CD4-positive, alpha-beta memory T cell (primary cell): ENCODE measurements at regions of chr18 and their contacts with region 1.

Region 1: GRCh38 chr18:45751766-45752165 is 27.8 kb downstream of the SLC14A1 start:
- DNase-seq: no peak
- H3K4me3 ChIP-seq: no peak overlapping the region
- H3K4me3 Mint-ChIP-seq: no peak overlapping the region
- H3K27ac ChIP-seq: no peak overlapping the region
- H3K27ac Mint-ChIP-seq: no peak overlapping the region
- H3K4me1 ChIP-seq: no peaks in the 10 kb centered on the region
- H3K4me1 Mint-ChIP-seq: no peaks in the 10 kb centered on the region
- H3K27me3 ChIP-seq: no peaks in the 10 kb centered on the region
- H3K27me3 Mint-ChIP-seq: peaks cover 10 to 19% of the 10 kb centered on the region in 2 donors

Region 2: GRCh38 chr18:45774065-45774521 is 22.3 kb after region 1 on chr18:
- CTCF ChIA-PET with region 1: no interaction called
- POLR2A ChIA-PET with region 1: interaction called, 3 read pairs
- intact Hi-C with region 1: loop called (anchors 1 kb)
- DNase-seq: peak in 4 of 5 donors; percentile 23 to 33 (median 30)
- H3K4me3 ChIP-seq: no peak overlapping the region
- H3K4me3 Mint-ChIP-seq: peak overlapping the region in 7 of 8 donors; percentile 50 to 88 (median 75)
- H3K27ac ChIP-seq: no peak overlapping the region
- H3K27ac Mint-ChIP-seq: peak overlapping the region; percentile 1 to 88 (median 71)
- H3K4me1 ChIP-seq: peaks cover 22% of the 10 kb centered on the region
- H3K4me1 Mint-ChIP-seq: peaks cover 25 to 56% (median 40%) of the 10 kb centered on the region in 4 donors
- H3K27me3 ChIP-seq: no peaks in the 10 kb centered on the region
- H3K27me3 Mint-ChIP-seq: peaks cover 2 to 12% of the 10 kb centered on the region in 2 donors